ENCODE measurements at regions of chr1 and their contacts with region 1.

Region 1: DNA sequence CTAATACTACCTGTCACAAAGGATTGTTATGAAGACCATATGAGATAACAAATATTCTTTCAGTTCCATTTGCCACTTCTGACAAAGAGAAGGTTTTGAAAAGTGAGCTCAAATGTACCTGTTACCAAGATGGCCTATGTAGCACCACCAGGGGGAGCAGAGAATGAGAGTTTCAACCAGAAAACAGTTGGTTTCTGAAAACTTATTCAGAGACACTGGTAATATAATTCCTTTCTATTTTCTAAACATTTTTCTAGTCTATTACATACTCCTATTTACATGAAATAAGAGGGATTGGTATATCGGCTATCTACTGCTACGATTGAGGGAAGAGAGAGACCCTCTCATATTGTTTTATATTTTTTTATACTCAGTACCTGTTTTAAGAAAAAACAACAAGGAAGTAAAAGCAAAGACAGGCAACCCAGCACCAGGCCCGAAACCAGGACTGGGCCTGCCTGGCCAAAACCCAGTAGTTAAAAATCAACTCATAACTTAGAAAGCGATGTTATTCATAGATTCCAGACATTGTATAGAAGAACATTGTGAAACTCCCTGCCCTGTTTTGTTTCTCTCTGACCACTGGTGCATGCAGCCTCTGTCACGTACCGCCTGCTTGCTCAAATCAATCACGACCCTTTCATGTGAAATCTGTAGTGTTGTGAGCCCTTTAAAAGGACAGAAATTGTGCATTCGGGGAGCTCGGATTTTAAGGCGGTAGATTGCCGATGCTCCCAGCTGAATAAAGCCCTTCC is 48.3 kb downstream of the IL23R start:
- DNase-seq: peak; percentile 23
- ATAC-seq: peak; percentile 71
- H3K4me3 ChIP-seq: no peak overlapping the region
- H3K27ac ChIP-seq: no peak overlapping the region
- H3K4me1 ChIP-seq: no peaks in the 10 kb centered on the region
- H3K27me3 ChIP-seq: no peaks in the 10 kb centered on the region
- CTCF ChIP-seq: peak; percentile 51
- EP300 ChIP-seq: no peak
- POLR2A ChIP-seq: no peak
- RAD21 ChIP-seq: no peak

Region 2: GRCh38 chr1:66764994-66765578 is 449.5 kb before region 1 on chr1:
- CTCF ChIA-PET with region 1: interaction called, 8 read pairs
- POLR2A ChIA-PET with region 1: no interaction called
- in situ Hi-C with region 1: no loop called
- intact Hi-C with region 1: loop called (anchors 2 kb)
- DNase-seq: peak; percentile 24
- ATAC-seq: peak; percentile 56; the same call in 2 of the 3 replicates
- H3K4me3 ChIP-seq: no peak overlapping the region
- H3K27ac ChIP-seq: no peak overlapping the region
- H3K4me1 ChIP-seq: no peaks in the 10 kb centered on the region
- H3K27me3 ChIP-seq: no peaks in the 10 kb centered on the region
- CTCF ChIP-seq: peak; percentile 67
- EP300 ChIP-seq: no peak
- POLR2A ChIP-seq: no peak
- RAD21 ChIP-seq: peak; percentile 30; the same call in 1 of the 2 replicates

Region 3: GRCh38 chr1:66996018-66996682 is 218.4 kb before region 1 on chr1:
- CTCF ChIA-PET with region 1: no interaction called
- POLR2A ChIA-PET with region 1: no interaction called
- in situ Hi-C with region 1: no loop called
- intact Hi-C with region 1: loop called (anchors 5 kb)
- DNase-seq: peak; percentile 46
- ATAC-seq: peak; percentile 80
- H3K4me3 ChIP-seq: no peak overlapping the region
- H3K27ac ChIP-seq: no peak overlapping the region
- H3K4me1 ChIP-seq: peaks cover 9% of the 10 kb centered on the region; the same call in 1 of the 2 replicates
- H3K27me3 ChIP-seq: no peaks in the 10 kb centered on the region
- CTCF ChIP-seq: peak; percentile 76
- EP300 ChIP-seq: no peak
- POLR2A ChIP-seq: no peak
- RAD21 ChIP-seq: peak; percentile 70

Region 4: DNA sequence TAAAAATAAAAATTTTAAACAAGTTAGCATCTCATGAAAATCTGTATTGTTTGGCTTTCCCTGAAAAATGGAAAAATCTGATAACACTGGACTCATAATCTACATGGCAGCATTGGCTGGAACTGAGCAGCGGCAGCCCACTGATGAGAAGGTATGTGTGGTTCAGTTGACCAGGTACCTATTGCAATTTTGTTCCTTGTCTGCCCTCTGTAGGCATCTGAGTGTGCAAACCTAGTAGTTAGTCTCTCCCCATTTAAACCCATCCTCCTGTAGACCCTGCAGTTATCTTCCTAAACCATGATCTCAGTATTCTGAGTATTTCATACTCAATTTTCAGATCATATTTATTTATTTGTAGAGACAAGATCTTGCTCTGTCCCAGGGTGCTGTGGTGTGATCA is 275.0 kb after region 1 on chr1:
- CTCF ChIA-PET with region 1: no interaction called
- POLR2A ChIA-PET with region 1: no interaction called
- in situ Hi-C with region 1: no loop called
- intact Hi-C with region 1: loop called (anchors 1 kb)
- DNase-seq: peak; percentile 36
- ATAC-seq: peak; percentile 96
- H3K4me3 ChIP-seq: no peak overlapping the region
- H3K27ac ChIP-seq: no peak overlapping the region
- H3K4me1 ChIP-seq: no peaks in the 10 kb centered on the region
- H3K27me3 ChIP-seq: no peaks in the 10 kb centered on the region; a peak in 1 of 5 replicates
- CTCF ChIP-seq: peak; percentile 63
- EP300 ChIP-seq: no peak
- POLR2A ChIP-seq: no peak
- RAD21 ChIP-seq: no peak

Region 5: DNA sequence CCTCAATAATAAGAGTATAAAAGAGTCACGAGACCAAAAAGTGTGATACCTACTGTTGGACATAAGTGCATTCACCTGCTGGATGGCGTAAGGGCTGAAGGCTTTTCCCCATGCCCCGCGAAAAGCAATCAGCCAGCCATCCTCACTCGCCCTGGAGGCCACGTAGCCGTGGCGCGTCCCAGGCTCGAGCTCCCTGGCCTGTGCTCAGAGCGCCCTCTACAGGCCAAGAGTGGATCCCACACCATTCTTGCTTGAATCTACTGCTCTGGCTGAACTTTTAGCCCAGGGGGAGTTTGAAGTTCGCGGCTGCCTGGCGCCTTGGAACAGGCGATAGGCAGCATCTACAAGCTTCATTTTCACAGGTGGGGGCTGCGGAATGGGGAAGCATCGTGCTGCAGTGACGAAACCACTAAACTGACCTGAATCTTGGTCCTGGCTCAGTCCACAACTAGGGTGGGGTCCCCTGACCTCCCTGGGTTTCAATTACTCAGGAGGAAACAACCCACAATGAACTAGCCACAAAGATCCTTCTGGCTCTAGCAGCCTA is 285.9 kb after region 1 on chr1:
- CTCF ChIA-PET with region 1: interaction called, 17 read pairs
- POLR2A ChIA-PET with region 1: no interaction called
- in situ Hi-C with region 1: loop called (anchors 5 kb)
- intact Hi-C with region 1: loop called (anchors 1 kb)
- DNase-seq: peak; percentile 78
- ATAC-seq: peak; percentile 99
- H3K4me3 ChIP-seq: no peak overlapping the region
- H3K27ac ChIP-seq: no peak overlapping the region
- H3K4me1 ChIP-seq: peaks cover 23% of the 10 kb centered on the region
- H3K27me3 ChIP-seq: no peaks in the 10 kb centered on the region
- CTCF ChIP-seq: peak; percentile 99
- EP300 ChIP-seq: 0 out of 4 replicates have a peak, but pooled peaks of 1 of the 2 experiments have one; percentile 14
- POLR2A ChIP-seq: no peak
- RAD21 ChIP-seq: peak; percentile 96

Measured in HepG2 (cell line).